Dorsolateral prefrontal cortex (tissue), 120 donors: ENCODE measurements at regions of chr17 and their contacts with region 1.

Region 1: GRCh38 chr17:7687908-7688807 is at the start of gene WRAP53:
- DNase-seq: peak; percentile 97 to 99 (median 98)
- H3K4me3 ChIP-seq: peak within 1 kb of the TSS; percentile 59 to 99 (median 86)
- H3K27ac ChIP-seq: peak within 1 kb of the TSS; percentile 92 to 100 (median 100)
- H3K27me3 ChIP-seq: no peaks in the 10 kb centered on the region
- CTCF ChIP-seq: peak; percentile 94 to 100 (median 99)
- total RNA-seq, gene WRAP53: 5.1 to 15.5 (median 8.1) TPM

Region 2: DNA sequence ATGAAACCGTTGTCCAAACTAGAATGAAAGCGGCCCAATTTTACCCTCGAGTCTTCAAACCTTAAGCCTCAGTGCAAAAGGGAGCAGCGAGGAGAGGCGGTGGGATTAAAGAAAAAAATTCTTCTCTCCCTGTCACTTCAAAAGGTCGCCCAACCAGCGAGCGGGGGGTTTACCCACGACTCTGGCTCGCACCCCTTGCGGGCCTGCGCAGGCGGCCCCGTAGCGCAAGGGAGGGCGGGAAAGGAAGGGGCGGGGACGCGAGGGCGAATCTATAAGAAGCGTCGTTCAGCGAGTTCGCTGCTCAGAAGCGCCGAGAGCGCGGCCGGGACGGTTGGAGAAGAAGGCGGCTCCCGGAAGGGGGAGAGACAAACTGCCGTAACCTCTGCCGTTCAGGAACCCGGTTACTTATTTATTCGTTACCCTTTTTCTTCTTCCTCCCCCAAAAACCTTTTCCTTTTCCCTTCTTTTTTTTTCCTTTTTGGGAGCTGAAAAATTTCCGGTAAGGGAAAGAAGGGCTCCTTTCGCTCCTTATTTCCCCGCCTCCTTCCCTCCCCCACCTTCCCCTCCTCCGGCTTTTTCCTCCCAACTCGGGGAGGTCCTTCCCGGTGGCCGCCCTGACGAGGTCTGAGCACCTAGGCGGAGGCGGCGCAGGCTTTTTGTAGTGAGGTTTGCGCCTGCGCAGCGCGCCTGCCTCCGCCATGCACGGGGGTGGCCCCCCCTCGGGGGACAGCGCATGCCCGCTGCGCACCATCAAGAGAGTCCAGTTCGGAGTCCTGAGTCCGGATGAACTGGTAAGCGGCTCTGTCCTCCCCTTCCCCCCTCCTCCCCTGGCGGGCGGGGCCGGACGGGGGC is 203.9 kb before region 1 on chr17 and contains the start of gene POLR2A:
- intact Hi-C with region 1: loop called in 1 of 2 experiments (anchors 2 kb)
- DNase-seq: peak; percentile 96 to 98 (median 97)
- H3K4me3 ChIP-seq: peak within 1 kb of the TSS; percentile 61 to 98 (median 84)
- H3K27ac ChIP-seq: peak within 1 kb of the TSS; percentile 94 to 100 (median 100)
- H3K27me3 ChIP-seq: no peaks in the 10 kb centered on the region
- CTCF ChIP-seq: peak in 10 of 56 donors; percentile 4 to 61 (median 44)
- total RNA-seq, gene POLR2A: 83.5 to 163 (median 124) TPM

Region 3: GRCh38 chr17:7583253-7584109 is 104.7 kb before region 1 on chr17 and contains the start of gene MPDU1:
- intact Hi-C with region 1: loop called (anchors 2 kb)
- DNase-seq: peak; percentile 89 to 97 (median 96)
- H3K4me3 ChIP-seq: peak within 1 kb of the TSS; percentile 48 to 91 (median 72)
- H3K27ac ChIP-seq: peak within 1 kb of the TSS; percentile 91 to 100 (median 99)
- H3K27me3 ChIP-seq: no peaks in the 10 kb centered on the region
- CTCF ChIP-seq: peak in 34 of 56 donors; percentile 6 to 54 (median 28)
- total RNA-seq, gene MPDU1: 25.1 to 53.7 (median 34.4) TPM

Region 4: DNA sequence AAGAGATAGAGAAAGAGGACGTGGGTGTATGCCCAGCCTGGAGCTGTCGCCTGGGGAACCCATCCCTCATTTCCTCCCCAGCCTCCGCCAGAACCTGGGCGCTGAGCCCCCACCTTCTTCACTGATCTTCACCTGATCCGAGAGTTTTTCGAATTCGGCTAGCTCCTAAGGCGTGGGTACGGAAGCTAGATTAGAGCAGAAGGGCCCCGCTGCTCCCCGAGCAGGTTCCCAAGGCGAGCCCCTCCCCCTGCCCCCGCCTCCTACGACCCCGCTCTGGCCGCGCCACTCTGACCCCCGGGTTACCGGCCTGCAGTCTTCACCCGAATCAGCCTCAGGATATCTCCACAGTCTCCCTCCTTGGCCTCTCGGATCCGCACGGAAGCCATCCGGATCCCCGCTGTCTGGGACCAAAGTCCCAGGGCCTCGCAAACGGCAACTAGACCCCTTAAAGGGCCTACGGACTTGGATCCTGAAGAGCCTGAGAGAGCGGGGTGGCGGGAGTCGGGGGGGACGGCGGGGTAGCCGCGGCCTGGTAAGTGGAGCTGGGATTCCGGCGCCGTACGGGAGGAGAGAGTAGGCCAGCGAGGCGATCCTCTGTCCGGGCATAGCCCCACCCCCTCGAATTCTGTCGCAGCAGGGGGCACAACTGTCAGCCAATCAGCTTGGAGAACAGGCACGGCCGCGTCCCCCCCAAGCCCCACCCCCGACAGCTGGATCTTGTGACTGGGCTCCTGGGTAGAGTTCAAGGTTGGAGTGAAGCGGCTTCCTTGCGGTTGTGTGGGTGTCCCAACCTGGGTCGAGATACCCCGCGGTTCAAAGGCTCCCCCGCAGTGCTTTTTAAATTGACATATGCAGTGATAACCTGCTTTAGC is 60.7 kb before region 1 on chr17 and contains the start of gene SAT2:
- intact Hi-C with region 1: loop called (anchors 5 kb)
- DNase-seq: peak; percentile 85 to 97 (median 95)
- H3K4me3 ChIP-seq: peak within 1 kb of the TSS; percentile 62 to 94 (median 84)
- H3K27ac ChIP-seq: peak within 1 kb of the TSS; percentile 65 to 98 (median 92)
- H3K27me3 ChIP-seq: no peaks in the 10 kb centered on the region
- CTCF ChIP-seq: peak in 15 of 56 donors; percentile 10 to 48 (median 20)
- total RNA-seq, gene SAT2: 72.5 to 143 (median 99.8) TPM

Region 5: GRCh38 chr17:7673239-7673638 is 14.9 kb before region 1 on chr17:
- intact Hi-C with region 1: no loop called
- DNase-seq: no peak
- H3K4me3 ChIP-seq: no peak overlapping the region
- H3K27ac ChIP-seq: no peak overlapping the region
- H3K27me3 ChIP-seq: no peaks in the 10 kb centered on the region
- CTCF ChIP-seq: peak in 14 of 56 donors; percentile 7 to 26 (median 16)

Region 6: DNA sequence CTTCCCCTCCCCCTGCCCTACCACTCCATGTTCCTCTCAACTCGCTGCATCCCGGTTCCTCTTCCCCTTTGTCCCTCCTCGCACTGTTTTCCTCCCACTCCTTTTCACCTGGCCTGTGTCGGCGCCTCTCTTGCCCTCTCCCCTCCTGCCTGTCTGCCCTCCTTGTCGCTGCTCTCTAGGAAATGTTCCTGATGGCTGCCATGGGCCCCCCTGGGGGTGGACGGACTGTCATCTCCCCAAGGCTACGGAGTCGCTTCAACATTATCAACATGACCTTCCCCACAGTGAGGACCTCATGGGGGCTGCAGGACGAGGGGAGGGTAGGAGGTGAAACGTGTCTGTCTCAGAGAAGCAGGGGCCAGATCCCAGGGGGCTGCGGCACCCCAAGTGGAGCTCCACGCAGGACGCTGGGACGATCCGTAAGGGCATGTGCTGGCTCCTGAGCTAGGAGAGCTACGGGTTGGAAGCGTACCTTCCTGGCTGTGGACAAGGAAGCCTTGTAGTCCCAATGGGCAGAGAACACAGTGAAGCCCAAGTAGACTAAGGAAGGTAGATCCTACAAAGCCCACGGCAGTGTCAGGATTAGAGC is 106.0 kb after region 1 on chr17:
- intact Hi-C with region 1: no loop called
- DNase-seq: no peak
- H3K4me3 ChIP-seq: no peak overlapping the region
- H3K27ac ChIP-seq: no peak overlapping the region
- H3K27me3 ChIP-seq: no peaks in the 10 kb centered on the region
- CTCF ChIP-seq: no peak

Region 7: GRCh38 chr17:7834962-7835813 is 147.0 kb after region 1 on chr17:
- intact Hi-C with region 1: loop called in 1 of 2 experiments (anchors 5 kb)
- DNase-seq: peak; percentile 92 to 98 (median 96)
- H3K4me3 ChIP-seq: peak overlapping the region; percentile 54 to 100 (median 86)
- H3K27ac ChIP-seq: peak overlapping the region; percentile 55 to 99 (median 95)
- H3K27me3 ChIP-seq: no peaks in the 10 kb centered on the region
- CTCF ChIP-seq: peak; percentile 28 to 89 (median 76)